SK-N-SH (cell line): ENCODE measurements at regions of chrX and their contacts with region 1.

Region 1: DNA sequence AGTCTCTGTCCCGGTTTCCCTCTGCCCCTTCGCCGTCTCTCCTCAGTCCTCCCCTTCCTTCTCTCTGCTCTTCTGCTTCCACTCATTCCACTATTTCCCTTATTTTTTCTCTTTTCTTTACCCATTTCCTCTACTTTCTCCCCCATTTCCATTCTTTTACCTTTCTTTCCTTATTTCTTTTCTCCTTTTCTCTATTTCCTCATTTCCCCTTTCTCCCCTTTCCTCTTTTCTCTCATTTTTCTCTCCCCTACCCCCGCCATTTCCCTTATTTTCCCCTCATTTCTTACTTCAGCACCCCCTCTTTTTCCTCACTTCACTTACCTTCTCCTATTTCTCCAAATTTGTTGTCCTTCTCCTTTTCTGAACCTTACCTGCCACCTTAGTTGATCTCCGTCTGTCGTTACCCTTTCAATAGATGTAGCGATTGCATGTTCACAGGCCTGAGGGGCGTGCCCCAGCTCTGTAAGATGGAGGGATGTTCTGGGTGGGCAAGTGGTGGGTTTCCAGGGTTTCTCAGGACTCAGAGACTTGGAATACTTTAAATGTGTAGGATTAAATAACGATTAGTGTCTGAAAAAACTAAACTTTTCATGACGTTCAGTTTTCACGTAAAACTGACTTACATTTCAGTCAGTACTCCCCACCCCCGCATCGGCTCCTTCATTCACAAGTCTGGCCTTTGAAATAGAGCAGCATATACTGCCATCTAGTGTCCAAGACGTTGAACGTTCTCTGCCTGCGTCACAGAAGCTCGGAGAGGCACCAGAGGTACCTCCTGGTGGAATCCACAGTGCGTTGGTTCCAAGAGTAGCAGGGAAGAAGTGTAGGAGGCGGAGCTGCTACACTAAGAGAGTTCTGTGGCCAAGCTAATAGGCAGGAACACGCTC is 641 bp upstream of the NCBP2L start:
- DNase-seq: peak; percentile 73
- H3K4me3 ChIP-seq: peak overlapping the region; percentile 37 to 58
- H3K27ac ChIP-seq: no peak overlapping the region
- H3K4me1 ChIP-seq: peaks cover 0 to 5% of the 10 kb centered on the region in 2 experiments; a peak in 1 of 4 replicates
- H3K27me3 ChIP-seq: peaks cover 51% of the 10 kb centered on the region
- CTCF ChIP-seq: peak; percentile 80
- EP300 ChIP-seq: no peak
- RAD21 ChIP-seq: peak; percentile 82

Region 2: GRCh38 chrX:107667426-107667825 is 109.5 kb before region 1 on chrX:
- CTCF ChIA-PET with region 1: interaction called, 63 read pairs
- POLR2A ChIA-PET with region 1: no interaction called
- DNase-seq: no peak
- H3K4me3 ChIP-seq: no peak overlapping the region
- H3K27ac ChIP-seq: no peak overlapping the region
- H3K4me1 ChIP-seq: no peaks in the 10 kb centered on the region
- H3K27me3 ChIP-seq: peaks cover 4% of the 10 kb centered on the region; the same call in 1 of the 2 replicates
- CTCF ChIP-seq: no peak
- EP300 ChIP-seq: no peak
- RAD21 ChIP-seq: no peak

Region 3: DNA sequence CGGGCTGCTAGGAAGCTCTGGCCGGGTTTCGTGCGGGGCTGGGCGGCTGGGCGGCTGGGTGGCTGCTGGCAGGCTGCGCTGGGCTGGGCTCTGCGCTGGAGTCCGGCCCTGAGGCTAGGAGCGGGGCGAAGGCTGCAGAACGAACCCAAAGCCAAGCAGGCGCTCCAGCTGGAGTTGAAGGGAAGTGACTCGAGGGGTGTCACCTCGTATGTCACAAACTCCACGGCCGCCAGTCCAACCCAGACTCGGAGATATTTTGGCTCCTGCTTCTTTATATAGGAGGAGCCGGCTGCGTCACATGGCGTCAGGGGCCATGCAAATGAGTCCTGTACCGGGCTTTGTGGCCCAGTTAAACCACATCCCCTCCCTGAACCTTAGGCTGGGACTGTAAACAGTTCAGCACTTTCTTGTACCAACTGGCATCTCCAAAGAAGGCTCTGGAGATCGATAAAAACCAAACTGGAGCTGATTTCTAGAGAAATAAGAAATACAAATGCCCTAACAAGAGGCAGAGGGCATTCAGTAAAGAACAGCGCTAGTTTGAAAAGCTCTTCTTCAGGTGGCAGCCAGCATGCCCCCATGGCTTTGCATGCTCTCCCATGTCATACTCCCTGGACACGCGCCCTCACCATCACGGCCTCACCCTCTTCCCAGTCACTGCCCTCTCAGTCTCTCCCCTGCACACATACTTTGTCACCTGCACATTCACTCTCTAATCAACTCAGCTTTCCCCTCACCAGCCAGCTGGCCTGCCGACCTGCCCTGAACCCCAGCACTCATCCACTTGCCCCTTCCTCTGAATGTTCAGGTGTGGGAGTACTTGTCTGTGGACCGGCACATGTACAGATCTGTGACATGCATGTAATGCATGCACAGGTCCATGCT is 59.8 kb before region 1 on chrX:
- CTCF ChIA-PET with region 1: interaction called, 12 read pairs
- POLR2A ChIA-PET with region 1: interaction called, 3 read pairs
- DNase-seq: peak; percentile 60
- H3K4me3 ChIP-seq: peak overlapping the region; percentile 60 to 70
- H3K27ac ChIP-seq: peak overlapping the region; percentile 65 to 74
- H3K4me1 ChIP-seq: peaks cover 6 to 13% of the 10 kb centered on the region in 2 experiments; a peak in 2 of 4 replicates
- H3K27me3 ChIP-seq: peaks cover 27% of the 10 kb centered on the region; the same call in 1 of the 2 replicates
- CTCF ChIP-seq: no peak
- EP300 ChIP-seq: no peak
- RAD21 ChIP-seq: no peak

Region 4: GRCh38 chrX:107766470-107767150 is 10.3 kb before region 1 on chrX:
- CTCF ChIA-PET with region 1: interaction called, 17 read pairs
- POLR2A ChIA-PET with region 1: no interaction called
- DNase-seq: no peak
- H3K4me3 ChIP-seq: no peak overlapping the region
- H3K27ac ChIP-seq: no peak overlapping the region
- H3K4me1 ChIP-seq: no peaks in the 10 kb centered on the region
- H3K27me3 ChIP-seq: peaks cover 21% of the 10 kb centered on the region
- CTCF ChIP-seq: no peak
- EP300 ChIP-seq: no peak
- RAD21 ChIP-seq: no peak

Region 5: GRCh38 chrX:107827030-107827831 is 50.3 kb after region 1 on chrX:
- CTCF ChIA-PET with region 1: no interaction called
- POLR2A ChIA-PET with region 1: no interaction called
- DNase-seq: no peak
- H3K4me3 ChIP-seq: 0 out of 4 replicates have a peak overlapping the region, but pooled peaks of 1 of the 2 experiments have one; percentile 19
- H3K27ac ChIP-seq: no peak overlapping the region
- H3K4me1 ChIP-seq: no peaks in the 10 kb centered on the region
- H3K27me3 ChIP-seq: peaks cover 12% of the 10 kb centered on the region; the same call in 1 of the 2 replicates
- CTCF ChIP-seq: no peak
- EP300 ChIP-seq: no peak
- RAD21 ChIP-seq: no peak